Colonic mucosa (tissue), 4 donors: ENCODE measurements at regions of chr15 and their contacts with region 1.

Region 1: GRCh38 chr15:68559345-68560310 is 19.2 kb upstream of the CORO2B start:
- DNase-seq: peak; percentile 64
- H3K4me3 ChIP-seq: peak overlapping the region; percentile 39
- H3K27ac ChIP-seq: no peak overlapping the region
- H3K4me1 ChIP-seq: no peaks in the 10 kb centered on the region
- H3K27me3 ChIP-seq: peaks cover 15% of the 10 kb centered on the region
- CTCF ChIP-seq: peak; percentile 96

Region 2: DNA sequence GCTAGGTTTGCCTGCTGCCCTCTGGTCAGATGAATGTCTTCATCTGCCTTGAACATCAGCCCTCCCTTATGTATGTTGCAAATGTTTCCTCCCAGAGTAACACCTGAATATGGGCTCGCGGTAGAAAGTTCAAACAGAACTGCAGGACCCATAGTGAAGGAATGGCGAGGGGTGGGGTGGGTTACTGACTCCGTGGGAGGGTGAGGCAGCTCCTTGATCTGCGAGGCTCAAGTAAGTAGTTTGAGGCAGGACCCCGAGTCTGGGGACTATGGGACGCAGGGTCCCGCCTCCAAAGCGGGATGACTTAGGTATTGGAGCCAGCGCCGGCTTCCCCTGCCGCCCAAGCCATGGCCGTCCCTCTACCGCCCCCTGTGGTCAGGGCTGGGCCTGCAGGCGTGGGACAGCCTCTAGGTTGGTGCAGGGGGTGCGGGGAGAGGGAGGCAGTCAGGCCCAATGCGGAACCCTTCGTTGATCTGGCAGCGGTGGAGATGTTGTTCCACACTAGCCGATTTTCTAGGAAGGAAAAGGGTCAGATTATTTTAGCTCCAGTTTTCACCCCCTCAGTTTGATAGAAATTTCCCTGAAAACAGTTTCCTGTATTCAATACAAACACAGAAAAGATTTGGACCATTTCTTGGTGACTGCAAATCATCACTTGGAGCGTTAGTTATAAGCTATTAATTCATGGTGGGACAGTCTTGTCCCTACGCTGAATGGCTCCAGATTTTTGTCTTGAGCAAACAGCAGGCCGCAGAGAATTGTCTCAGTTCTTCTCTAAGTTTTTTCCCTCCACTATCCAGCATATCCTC is 91.5 kb after region 1 on chr15:
- intact Hi-C with region 1: loop called (anchors 5 kb)
- DNase-seq: peak; percentile 63
- H3K4me3 ChIP-seq: no peak overlapping the region
- H3K27ac ChIP-seq: no peak overlapping the region
- H3K4me1 ChIP-seq: no peaks in the 10 kb centered on the region
- H3K27me3 ChIP-seq: no peaks in the 10 kb centered on the region
- CTCF ChIP-seq: peak; percentile 89